PC-3 (cell line): ENCODE measurements at regions of chrX and their contacts with region 1.

Region 1: DNA sequence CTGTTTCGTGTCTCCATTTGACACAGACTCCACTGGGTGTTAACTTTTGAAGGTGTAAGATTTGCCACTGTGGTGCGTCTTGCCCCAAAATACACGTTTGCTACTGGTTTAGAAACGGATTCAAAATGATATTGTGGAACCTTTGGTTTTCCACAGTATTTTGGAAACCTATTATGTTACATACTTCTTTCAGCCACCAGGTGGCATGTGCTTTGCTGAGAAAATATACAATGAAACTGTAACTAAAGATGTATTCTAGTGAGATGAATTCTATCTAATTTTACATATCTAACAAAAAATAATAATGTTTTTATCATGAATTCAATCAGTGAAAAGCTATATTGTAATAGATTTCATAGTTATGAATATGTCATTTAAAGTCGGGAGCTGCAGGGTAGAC is 28.4 kb upstream of the SLITRK4 start:
- DNase-seq: peak; percentile 53
- ATAC-seq: no peak
- H3K4me3 ChIP-seq: no peak overlapping the region
- H3K27ac ChIP-seq: no peak overlapping the region
- H3K4me1 ChIP-seq: no peaks in the 10 kb centered on the region
- H3K27me3 ChIP-seq: no peaks in the 10 kb centered on the region
- CTCF ChIP-seq: peak; percentile 65

Region 2: DNA sequence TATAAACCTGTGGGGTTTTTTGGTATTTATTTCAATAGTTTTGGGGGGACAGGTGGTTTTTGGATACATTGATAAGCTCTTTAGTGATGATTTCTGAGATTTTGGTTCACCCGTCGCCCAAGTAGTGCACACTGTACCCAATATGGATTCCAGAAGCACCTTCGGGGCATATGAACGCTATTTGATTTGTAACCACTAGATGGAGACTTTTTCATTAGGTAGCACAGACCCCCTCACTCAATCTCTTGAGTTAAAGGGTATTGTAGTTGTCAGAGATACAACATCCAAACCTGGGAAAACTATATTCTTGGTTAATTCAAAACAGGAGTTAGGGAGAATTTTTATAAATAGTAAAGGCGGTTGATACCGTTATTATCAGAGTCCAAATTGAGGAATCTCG is 226.9 kb before region 1 on chrX:
- CTCF ChIA-PET with region 1: no interaction called
- POLR2A ChIA-PET with region 1: no interaction called
- intact Hi-C with region 1: loop called (anchors 10 kb)
- DNase-seq: peak; percentile 60
- ATAC-seq: no peak
- H3K4me3 ChIP-seq: 0 out of 2 replicates have a peak overlapping the region, but pooled peaks have one; percentile 44
- H3K27ac ChIP-seq: no peak overlapping the region
- H3K4me1 ChIP-seq: no peaks in the 10 kb centered on the region
- H3K27me3 ChIP-seq: no peaks in the 10 kb centered on the region
- CTCF ChIP-seq: peak; percentile 68

Region 3: GRCh38 chrX:144398108-144398507 is 733.8 kb after region 1 on chrX:
- CTCF ChIA-PET with region 1: no interaction called
- POLR2A ChIA-PET with region 1: no interaction called
- intact Hi-C with region 1: loop called (anchors 5 kb)
- DNase-seq: no peak
- ATAC-seq: no peak
- H3K4me3 ChIP-seq: no peak overlapping the region
- H3K27ac ChIP-seq: no peak overlapping the region
- H3K4me1 ChIP-seq: no peaks in the 10 kb centered on the region
- H3K27me3 ChIP-seq: no peaks in the 10 kb centered on the region
- CTCF ChIP-seq: no peak